AG04449 (cell line): ENCODE measurements at regions of chr18 and their contacts with region 1.

Region 1: GRCh38 chr18:12934454-12935071 is 13.2 kb upstream of the SEH1L start:
- DNase-seq: no peak
- H3K4me3 ChIP-seq: no peak overlapping the region; the same call in 1 of the 2 replicates
- CTCF ChIP-seq: peak; percentile 90

Region 2: DNA sequence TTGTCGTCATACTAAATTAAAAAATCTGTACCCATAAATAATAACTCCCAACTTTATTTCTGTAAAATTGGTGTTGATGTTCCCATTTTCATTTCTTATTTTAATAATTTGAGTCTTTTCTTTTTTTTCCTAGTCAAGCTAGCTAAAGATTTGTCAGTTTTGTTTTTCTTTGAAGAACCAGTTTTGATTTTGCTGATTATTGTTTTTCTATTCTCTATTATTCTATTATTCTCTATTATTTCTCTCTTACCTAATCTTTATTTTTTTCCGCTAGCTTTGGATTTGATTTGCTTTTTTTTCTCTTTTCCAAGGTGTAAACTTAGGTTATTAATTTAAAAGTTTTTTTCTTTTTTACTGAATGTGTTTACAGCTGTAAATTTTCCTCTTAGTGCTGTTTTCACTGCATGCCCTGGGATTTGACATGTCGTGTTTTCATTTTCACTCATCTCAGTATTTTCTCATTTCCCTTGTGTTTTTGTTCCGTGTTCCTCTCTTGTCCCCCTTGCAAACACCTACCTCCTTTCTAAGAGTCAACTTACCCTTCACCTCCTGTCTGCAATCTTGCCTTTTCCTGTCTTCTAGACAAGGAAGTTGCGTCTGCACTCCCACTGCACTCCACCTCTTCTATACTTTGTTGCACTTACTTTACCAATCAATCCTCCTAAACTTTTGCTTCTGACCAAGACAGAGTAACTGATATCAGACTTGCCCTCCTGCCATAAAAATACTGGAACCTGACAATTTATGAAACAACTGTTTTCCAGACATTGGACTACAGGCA is 212.9 kb before region 1 on chr18:
- CTCF ChIA-PET with region 1: interaction called, 307 read pairs
- POLR2A ChIA-PET with region 1: no interaction called
- DNase-seq: no peak
- H3K4me3 ChIP-seq: no peak overlapping the region
- CTCF ChIP-seq: no peak

Region 3: GRCh38 chr18:12744103-12744502 is 190.5 kb before region 1 on chr18:
- CTCF ChIA-PET with region 1: interaction called, 193 read pairs
- POLR2A ChIA-PET with region 1: no interaction called
- DNase-seq: no peak
- H3K4me3 ChIP-seq: no peak overlapping the region
- CTCF ChIP-seq: peak; percentile 46

Region 4: GRCh38 chr18:12890506-12890905 is 44.1 kb before region 1 on chr18:
- CTCF ChIA-PET with region 1: interaction called, 23 read pairs
- POLR2A ChIA-PET with region 1: no interaction called
- DNase-seq: no peak
- H3K4me3 ChIP-seq: no peak overlapping the region
- CTCF ChIP-seq: no peak

Region 5: GRCh38 chr18:12921178-12921577 is 13.4 kb before region 1 on chr18:
- CTCF ChIA-PET with region 1: interaction called, 29 read pairs
- POLR2A ChIA-PET with region 1: no interaction called
- DNase-seq: no peak
- H3K4me3 ChIP-seq: no peak overlapping the region
- CTCF ChIP-seq: no peak

Region 6: DNA sequence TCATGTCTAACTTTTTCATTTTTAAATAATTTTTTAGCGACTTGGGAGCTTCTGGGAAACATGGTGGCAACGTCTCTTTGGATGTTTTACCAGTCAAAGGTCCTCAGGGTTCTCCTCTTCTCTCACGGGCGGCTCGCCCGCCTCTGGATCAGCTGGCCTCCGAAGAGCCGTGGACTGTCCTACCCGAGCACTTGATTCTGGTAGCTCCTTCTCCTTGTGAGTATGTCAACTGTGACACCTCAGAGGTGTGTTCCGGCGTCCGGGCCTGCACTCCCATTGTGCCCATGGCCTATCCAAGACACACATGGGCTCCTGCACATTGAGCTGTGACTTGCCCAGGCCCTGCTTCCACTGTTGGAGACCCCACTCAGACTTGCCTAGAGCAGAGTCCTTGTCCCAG is 160.9 kb after region 1 on chr18:
- CTCF ChIA-PET with region 1: no interaction called
- POLR2A ChIA-PET with region 1: no interaction called
- DNase-seq: no peak
- H3K4me3 ChIP-seq: no peak overlapping the region
- CTCF ChIP-seq: no peak